Natural killer cell (primary cell): ENCODE measurements at regions of chr7 and their contacts with region 1.

Region 1: GRCh38 chr7:2451171-2452073 is 24.8 kb downstream of the GRIFIN start:
- DNase-seq: peak; percentile 76 to 84
- ATAC-seq: peak; percentile 83 to 87 (median 85)
- H3K4me3 ChIP-seq: peak overlapping the region; percentile 26
- H3K4me3 Mint-ChIP-seq: peak overlapping the region; percentile 82
- H3K27ac ChIP-seq: no peak overlapping the region
- H3K27ac Mint-ChIP-seq: peak overlapping the region; percentile 75 to 80
- H3K4me1 ChIP-seq: peaks cover 20% of the 10 kb centered on the region
- H3K4me1 Mint-ChIP-seq: peaks cover 23 to 24% of the 10 kb centered on the region in 2 donors
- H3K27me3 ChIP-seq: no peaks in the 10 kb centered on the region
- H3K27me3 Mint-ChIP-seq: no peaks in the 10 kb centered on the region
- CTCF ChIP-seq: peak; percentile 84

Region 2: GRCh38 chr7:2471396-2471795 is 20.0 kb after region 1 on chr7:
- intact Hi-C with region 1: loop called (anchors 1 kb)
- DNase-seq: no peak
- ATAC-seq: no peak
- H3K4me3 ChIP-seq: no peak overlapping the region
- H3K4me3 Mint-ChIP-seq: no peak overlapping the region
- H3K27ac ChIP-seq: no peak overlapping the region
- H3K27ac Mint-ChIP-seq: no peak overlapping the region
- H3K4me1 ChIP-seq: peaks cover 8% of the 10 kb centered on the region
- H3K4me1 Mint-ChIP-seq: peaks cover 5 to 6% of the 10 kb centered on the region in 2 donors
- H3K27me3 ChIP-seq: no peaks in the 10 kb centered on the region
- H3K27me3 Mint-ChIP-seq: peaks cover 7 to 11% of the 10 kb centered on the region in 2 donors
- CTCF ChIP-seq: no peak

Region 3: GRCh38 chr7:2680792-2681490 is 229.5 kb after region 1 on chr7:
- intact Hi-C with region 1: loop called (anchors 5 kb)
- DNase-seq: peak; percentile 53 to 71
- ATAC-seq: peak; percentile 56 to 70 (median 67)
- H3K4me3 ChIP-seq: no peak overlapping the region
- H3K4me3 Mint-ChIP-seq: no peak overlapping the region
- H3K27ac ChIP-seq: no peak overlapping the region
- H3K27ac Mint-ChIP-seq: no peak overlapping the region
- H3K4me1 ChIP-seq: no peaks in the 10 kb centered on the region
- H3K4me1 Mint-ChIP-seq: peaks cover 0 to 4% of the 10 kb centered on the region in 2 donors
- H3K27me3 ChIP-seq: no peaks in the 10 kb centered on the region
- H3K27me3 Mint-ChIP-seq: peaks cover 11 to 15% of the 10 kb centered on the region in 2 donors
- CTCF ChIP-seq: peak; percentile 62